MCF 10A (cell line): ENCODE measurements at regions of chr1 and their contacts with region 1.

Region 1: GRCh38 chr1:201114236-201115131 is 2.3 kb upstream of the CACNA1S start:
- DNase-seq: peak; percentile 98
- H3K4me3 Mint-ChIP-seq: peak overlapping the region; percentile 78
- H3K27ac Mint-ChIP-seq: peak overlapping the region; percentile 55
- H3K4me1 Mint-ChIP-seq: no peaks in the 10 kb centered on the region
- H3K27me3 Mint-ChIP-seq: no peaks in the 10 kb centered on the region
- CTCF ChIP-seq: peak; percentile 98

Region 2: GRCh38 chr1:200558866-200559459 is 555.5 kb before region 1 on chr1:
- CTCF ChIA-PET with region 1: interaction called, 28 read pairs
- POLR2A ChIA-PET with region 1: no interaction called
- intact Hi-C with region 1: loop called (anchors 1 kb)
- DNase-seq: peak; percentile 62
- H3K4me3 Mint-ChIP-seq: no peak overlapping the region
- H3K27ac Mint-ChIP-seq: peak overlapping the region; percentile 28
- H3K4me1 Mint-ChIP-seq: peaks cover 6% of the 10 kb centered on the region
- H3K27me3 Mint-ChIP-seq: no peaks in the 10 kb centered on the region
- CTCF ChIP-seq: peak; percentile 81

Region 3: GRCh38 chr1:201023517-201023902 is 91.0 kb before region 1 on chr1 and contains the start of gene KIF21B:
- CTCF ChIA-PET with region 1: interaction called, 10 read pairs
- POLR2A ChIA-PET with region 1: interaction called, 4 read pairs
- intact Hi-C with region 1: no loop called
- DNase-seq: peak; percentile 90
- H3K4me3 Mint-ChIP-seq: peak within 1 kb of the TSS; percentile 43
- H3K27ac Mint-ChIP-seq: no peak within 1 kb of the TSS
- H3K4me1 Mint-ChIP-seq: peaks cover 22% of the 10 kb centered on the region
- H3K27me3 Mint-ChIP-seq: no peaks in the 10 kb centered on the region
- CTCF ChIP-seq: no peak
- total RNA-seq, gene KIF21B: 9.5 and 12.7 TPM in 2 replicates

Region 4: GRCh38 chr1:201077736-201078135 is 36.7 kb before region 1 on chr1:
- CTCF ChIA-PET with region 1: interaction called, 54 read pairs
- POLR2A ChIA-PET with region 1: no interaction called
- intact Hi-C with region 1: loop called (anchors 5 kb)
- DNase-seq: no peak
- H3K4me3 Mint-ChIP-seq: no peak overlapping the region
- H3K27ac Mint-ChIP-seq: no peak overlapping the region
- H3K4me1 Mint-ChIP-seq: no peaks in the 10 kb centered on the region
- H3K27me3 Mint-ChIP-seq: peaks cover 27% of the 10 kb centered on the region
- CTCF ChIP-seq: no peak

Region 5: GRCh38 chr1:201096035-201096434 is 18.4 kb before region 1 on chr1:
- CTCF ChIA-PET with region 1: interaction called, 46 read pairs
- POLR2A ChIA-PET with region 1: no interaction called
- intact Hi-C with region 1: no loop called
- DNase-seq: no peak
- H3K4me3 Mint-ChIP-seq: no peak overlapping the region
- H3K27ac Mint-ChIP-seq: no peak overlapping the region
- H3K4me1 Mint-ChIP-seq: no peaks in the 10 kb centered on the region
- H3K27me3 Mint-ChIP-seq: peaks cover 20% of the 10 kb centered on the region
- CTCF ChIP-seq: no peak

Region 6: GRCh38 chr1:201126832-201127754 is 12.6 kb after region 1 on chr1 and contains the start of gene ASCL5:
- CTCF ChIA-PET with region 1: interaction called, 25 read pairs
- POLR2A ChIA-PET with region 1: interaction called, 3 read pairs
- intact Hi-C with region 1: no loop called
- DNase-seq: peak; percentile 73
- H3K4me3 Mint-ChIP-seq: no peak within 1 kb of the TSS
- H3K27ac Mint-ChIP-seq: no peak within 1 kb of the TSS
- H3K4me1 Mint-ChIP-seq: peaks cover 10% of the 10 kb centered on the region
- H3K27me3 Mint-ChIP-seq: peaks cover 13% of the 10 kb centered on the region
- CTCF ChIP-seq: peak; percentile 13
- total RNA-seq, gene ASCL5: not detected in 2 replicates

Region 7: GRCh38 chr1:201224666-201225370 is 110.3 kb after region 1 on chr1:
- CTCF ChIA-PET with region 1: interaction called, 8 read pairs
- POLR2A ChIA-PET with region 1: no interaction called
- intact Hi-C with region 1: loop called (anchors 1 kb)
- DNase-seq: no peak
- H3K4me3 Mint-ChIP-seq: no peak overlapping the region
- H3K27ac Mint-ChIP-seq: no peak overlapping the region
- H3K4me1 Mint-ChIP-seq: peaks cover 1% of the 10 kb centered on the region
- H3K27me3 Mint-ChIP-seq: no peaks in the 10 kb centered on the region
- CTCF ChIP-seq: no peak